Activated B cell treated with CpG ODN at 0.5 μM for 24 hours (primary cell): ENCODE measurements at regions of chr6 and their contacts with region 1.

Region 1: GRCh38 chr6:149963462-149964307 is at the start of gene ULBP1:
- DNase-seq: peak; percentile 76
- ATAC-seq: peak; percentile 74
- H3K4me3 Mint-ChIP-seq: peak within 1 kb of the TSS; percentile 91
- H3K27ac Mint-ChIP-seq: peak within 1 kb of the TSS; percentile 81
- H3K4me1 Mint-ChIP-seq: peaks cover 27% of the 10 kb centered on the region
- H3K27me3 Mint-ChIP-seq: peaks cover 72% of the 10 kb centered on the region
- CTCF ChIP-seq: no peak
- total RNA-seq, gene ULBP1: 1.9 and 2.2 TPM in 2 replicates

Region 2: DNA sequence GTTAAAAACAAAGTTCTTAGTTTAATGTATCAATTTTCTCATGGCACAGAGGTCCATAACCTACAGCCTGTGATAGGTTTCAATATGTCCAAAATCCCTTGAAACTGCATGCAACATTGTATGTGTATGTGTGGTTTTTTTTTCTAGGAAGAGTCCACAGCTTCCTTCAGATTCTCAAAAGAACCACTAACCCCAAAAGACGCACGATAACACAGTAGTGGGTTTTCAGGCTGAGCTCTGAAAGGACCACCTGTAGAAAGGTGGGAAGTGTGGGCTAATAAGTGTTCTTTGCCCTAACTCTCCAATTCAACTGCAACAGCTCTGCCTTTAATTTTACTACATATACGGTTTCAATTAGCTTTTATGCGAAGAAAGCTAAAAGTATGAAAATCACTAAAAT is 303.7 kb before region 1 on chr6:
- CTCF ChIA-PET with region 1: no interaction called
- POLR2A ChIA-PET with region 1: no interaction called
- intact Hi-C with region 1: no loop called
- DNase-seq: no peak
- ATAC-seq: no peak
- H3K4me3 Mint-ChIP-seq: no peak overlapping the region
- H3K27ac Mint-ChIP-seq: no peak overlapping the region
- H3K4me1 Mint-ChIP-seq: no peaks in the 10 kb centered on the region
- H3K27me3 Mint-ChIP-seq: no peaks in the 10 kb centered on the region
- CTCF ChIP-seq: no peak

Region 3: GRCh38 chr6:149941583-149942431 is 21.9 kb before region 1 on chr6 and contains the start of gene ULBP2:
- CTCF ChIA-PET with region 1: no interaction called
- POLR2A ChIA-PET with region 1: interaction called, 3 read pairs
- intact Hi-C with region 1: loop called (anchors 1 kb)
- DNase-seq: peak; percentile 53
- ATAC-seq: peak; percentile 70
- H3K4me3 Mint-ChIP-seq: peak within 1 kb of the TSS; percentile 89
- H3K27ac Mint-ChIP-seq: peak within 1 kb of the TSS; percentile 73
- H3K4me1 Mint-ChIP-seq: peaks cover 43% of the 10 kb centered on the region
- H3K27me3 Mint-ChIP-seq: peaks cover 46% of the 10 kb centered on the region
- CTCF ChIP-seq: no peak
- total RNA-seq, gene ULBP2: 0.29 and 0.37 TPM in 2 replicates

Region 4: DNA sequence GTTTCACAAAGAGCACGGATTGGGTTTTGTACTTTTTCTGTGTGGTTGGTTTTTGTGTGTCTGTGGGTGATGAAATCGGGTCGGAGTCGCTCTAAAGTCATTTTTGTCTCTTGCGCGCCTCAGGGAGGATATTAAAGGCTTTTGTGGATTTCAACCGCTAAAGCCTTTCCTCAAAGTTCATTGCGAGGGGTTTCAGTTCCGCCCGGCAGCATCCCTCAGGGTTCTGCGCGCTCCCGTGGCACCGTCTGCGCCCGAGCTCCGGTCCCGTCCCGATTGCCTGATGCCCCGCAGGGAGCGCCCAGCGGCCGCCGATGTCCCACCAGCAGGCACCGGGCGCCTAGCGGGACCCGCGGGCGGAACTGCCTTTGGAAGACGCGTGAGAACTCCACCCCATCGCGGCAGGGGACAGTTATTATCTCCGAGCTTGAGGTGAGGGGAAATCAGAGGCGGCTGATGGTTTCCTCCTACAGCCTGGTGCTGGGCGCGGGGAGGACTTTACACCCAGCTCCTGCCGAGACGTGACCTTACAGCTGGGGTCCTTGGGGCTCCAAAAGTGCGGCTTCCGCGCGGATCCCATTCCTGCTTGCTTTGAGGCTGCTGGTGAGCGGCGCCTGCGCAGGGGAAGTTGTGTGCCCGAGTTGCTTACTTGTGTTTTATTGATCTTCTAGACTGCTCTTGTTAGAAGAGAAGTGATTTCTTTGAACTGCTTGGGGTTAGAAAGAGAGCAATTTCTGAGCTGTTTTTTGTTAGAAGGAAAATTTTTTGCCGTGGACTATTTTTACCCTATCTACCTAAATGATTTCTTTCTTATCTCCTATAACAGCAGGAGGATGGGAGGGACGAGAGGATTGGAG is 27.2 kb after region 1 on chr6:
- CTCF ChIA-PET with region 1: no interaction called
- POLR2A ChIA-PET with region 1: interaction called, 5 read pairs
- intact Hi-C with region 1: loop called (anchors 2 kb)
- DNase-seq: peak; percentile 59
- ATAC-seq: peak; percentile 70
- H3K4me3 Mint-ChIP-seq: peak overlapping the region; percentile 75
- H3K27ac Mint-ChIP-seq: peak overlapping the region; percentile 5
- H3K4me1 Mint-ChIP-seq: peaks cover 26% of the 10 kb centered on the region
- H3K27me3 Mint-ChIP-seq: peaks cover 66% of the 10 kb centered on the region
- CTCF ChIP-seq: no peak

Region 5: DNA sequence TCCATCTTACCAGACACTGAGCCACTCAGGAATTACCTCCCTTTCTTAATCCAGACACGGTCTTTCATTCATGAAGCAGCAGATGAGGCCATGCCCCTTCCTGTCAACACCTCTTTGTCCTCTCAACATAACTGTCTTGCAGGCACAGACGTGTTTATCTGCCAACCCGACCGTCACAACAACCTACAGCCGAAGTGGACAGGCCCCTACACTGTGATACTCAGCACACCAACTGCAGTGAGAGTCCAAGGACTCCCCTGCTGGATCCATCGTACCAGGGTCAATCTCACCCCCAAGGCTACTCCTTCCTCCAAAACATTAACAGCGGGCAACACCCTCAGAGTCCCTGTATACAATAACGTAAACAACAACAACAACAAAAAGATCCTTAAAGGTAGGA is 135.9 kb after region 1 on chr6:
- CTCF ChIA-PET with region 1: no interaction called
- POLR2A ChIA-PET with region 1: no interaction called
- intact Hi-C with region 1: no loop called
- DNase-seq: no peak
- ATAC-seq: no peak
- H3K4me3 Mint-ChIP-seq: no peak overlapping the region
- H3K27ac Mint-ChIP-seq: no peak overlapping the region
- H3K4me1 Mint-ChIP-seq: no peaks in the 10 kb centered on the region
- H3K27me3 Mint-ChIP-seq: peaks cover 11% of the 10 kb centered on the region
- CTCF ChIP-seq: no peak